ENCODE measurements at regions of chr5 and their contacts with region 1.

Region 1: DNA sequence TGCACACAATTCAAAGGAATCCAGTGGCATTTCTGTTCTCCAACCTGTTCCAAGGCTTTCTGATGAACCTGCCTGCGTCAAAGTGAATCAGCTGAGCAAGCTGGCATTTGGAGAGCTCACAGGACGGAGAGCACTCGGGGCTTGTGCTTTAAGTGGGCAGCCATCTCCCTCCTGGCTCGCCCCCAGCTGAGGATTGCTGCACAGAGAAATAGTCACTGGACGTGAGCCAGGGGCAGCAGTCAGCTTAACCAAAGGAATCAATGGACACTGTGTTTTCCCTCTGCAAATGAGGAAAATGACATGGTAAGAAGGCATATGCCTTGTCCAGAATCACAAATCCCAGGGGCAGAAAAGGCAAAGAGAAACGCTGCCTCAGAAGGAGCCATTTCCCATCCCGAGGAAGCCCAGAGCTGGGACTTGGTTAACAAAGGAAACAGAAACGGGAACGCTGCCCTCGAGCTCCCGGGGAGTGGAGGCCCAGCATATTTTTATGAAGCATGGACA is 299.4 kb downstream of the ZSWIM6 start:
- DNase-seq: peak; percentile 82
- ATAC-seq: peak; percentile 77

Region 2: GRCh38 chr5:60944904-60945812 is 686.3 kb before region 1 on chr5 and contains the starts of genes ERCC8 and NDUFAF2:
- intact Hi-C with region 1: loop called (anchors 10 kb)
- DNase-seq: peak; percentile 93
- ATAC-seq: peak; percentile 99
- total RNA-seq, gene ERCC8: 4.2 TPM
- total RNA-seq, gene NDUFAF2: 42.6 TPM

Region 3: GRCh38 chr5:61408476-61409168 is 222.9 kb before region 1 on chr5:
- intact Hi-C with region 1: loop called (anchors 10 kb)
- DNase-seq: peak; percentile 100
- ATAC-seq: peak; percentile 100

Region 4: DNA sequence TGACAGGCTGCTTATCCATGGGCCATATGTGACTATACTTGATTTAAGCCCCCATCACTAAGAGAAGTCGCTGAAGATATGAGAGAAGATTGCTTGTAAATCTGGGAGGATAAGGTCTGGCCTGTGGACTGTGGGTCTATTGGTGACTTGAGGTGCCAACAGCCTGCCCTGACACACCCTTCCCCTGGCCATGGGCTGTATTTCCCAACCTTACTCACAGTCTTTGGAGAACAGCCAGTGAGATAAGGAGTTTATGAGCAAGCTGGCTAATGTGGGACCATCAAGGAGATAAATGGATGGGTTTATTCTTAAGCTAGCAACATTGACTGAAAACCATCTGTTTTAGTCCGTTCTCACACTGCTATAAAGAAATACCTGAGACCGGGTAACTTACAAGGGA is 68.1 kb before region 1 on chr5:
- intact Hi-C with region 1: no loop called
- DNase-seq: no peak
- ATAC-seq: no peak

Region 5: DNA sequence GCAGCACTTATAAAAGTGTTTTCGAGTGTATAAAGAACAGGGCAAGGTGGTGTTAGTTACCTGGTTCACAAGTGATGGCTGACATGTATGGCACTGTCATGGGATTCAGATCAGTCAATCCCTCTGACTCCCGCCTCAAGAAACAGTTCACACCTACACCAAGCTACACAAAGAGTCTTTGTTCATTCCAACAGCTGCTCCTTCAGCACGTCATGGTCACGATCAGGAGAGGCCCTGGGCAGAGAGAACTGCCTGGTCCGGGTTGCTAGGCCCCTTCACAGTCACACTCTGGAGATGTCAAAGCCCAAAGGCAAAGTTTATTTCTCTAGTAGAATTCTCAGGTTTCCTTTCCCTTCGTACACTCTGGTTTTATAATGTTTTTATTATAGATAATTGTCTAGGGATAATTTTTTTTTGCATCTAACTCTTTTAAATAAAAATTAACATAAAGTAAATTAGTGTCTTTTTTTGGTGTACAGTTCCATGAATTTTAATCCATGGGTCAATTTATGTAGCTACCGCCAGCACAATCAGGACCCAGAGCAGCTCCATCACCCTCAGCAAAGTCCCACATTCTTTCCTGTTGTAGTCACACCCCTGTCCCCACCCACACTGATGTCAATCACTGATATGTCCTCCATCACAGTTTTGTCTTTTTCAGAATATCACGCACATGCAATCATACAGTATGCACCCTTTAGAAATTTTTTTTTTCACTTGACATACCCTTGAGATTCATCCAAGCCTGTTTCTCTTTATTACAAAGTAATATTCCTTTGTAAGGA is 127.4 kb after region 1 on chr5:
- intact Hi-C with region 1: no loop called
- DNase-seq: no peak
- ATAC-seq: no peak

Measured in Right ventricle myocardium inferior (tissue), 1 donor.